ENCODE measurements at regions of chr12 and their contacts with region 1.

Region 1: DNA sequence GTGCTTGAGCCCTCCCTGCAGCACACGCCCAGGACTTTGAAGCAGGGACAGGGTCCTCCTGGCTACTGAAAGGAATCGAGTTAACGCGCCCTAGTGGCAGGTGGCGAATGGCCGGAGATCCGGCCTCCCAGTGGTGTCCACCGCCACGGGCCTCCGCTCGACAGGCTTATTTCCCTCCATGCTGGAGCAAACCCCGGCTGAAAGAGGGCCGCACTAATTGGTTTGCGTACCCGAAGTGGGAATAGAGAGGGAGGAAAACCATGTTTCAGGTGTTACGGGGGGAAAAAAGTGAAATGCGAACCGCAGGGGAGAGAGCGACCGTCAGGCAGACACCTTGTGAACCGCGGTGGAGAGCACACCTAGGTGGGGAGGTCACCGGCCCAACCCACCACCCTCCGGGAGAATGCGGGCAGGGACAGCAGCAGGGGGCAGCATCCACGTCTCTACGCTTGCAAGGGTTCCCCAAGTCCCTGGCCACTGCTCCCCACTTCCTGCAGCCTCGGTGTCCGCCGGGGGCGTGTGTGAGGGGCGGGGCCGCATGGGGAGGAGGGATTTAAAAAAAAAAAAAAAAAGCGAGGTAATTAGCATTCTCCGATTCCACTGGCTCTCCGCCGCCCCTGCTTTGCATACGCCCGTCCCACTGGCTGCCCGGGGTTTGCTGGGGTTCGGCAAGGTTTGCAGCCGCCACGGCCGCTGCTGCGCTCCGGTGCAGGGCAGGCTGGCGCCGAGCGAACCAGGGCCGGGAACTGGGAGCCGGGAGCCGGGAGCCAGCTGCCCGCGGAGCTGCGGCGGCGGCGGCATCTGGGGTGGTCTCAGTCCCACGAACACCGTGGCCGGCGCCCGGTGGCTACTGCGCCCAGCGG is 224.6 kb upstream of the CRY1 start:
- DNase-seq: peak; percentile 88
- ATAC-seq: peak; percentile 75
- H3K4me3 Mint-ChIP-seq: peak overlapping the region; percentile 89
- H3K27ac Mint-ChIP-seq: peak overlapping the region; percentile 59
- H3K4me1 Mint-ChIP-seq: peaks cover 19% of the 10 kb centered on the region
- H3K27me3 Mint-ChIP-seq: peaks cover 35% of the 10 kb centered on the region

Region 2: GRCh38 chr12:107264667-107265066 is 53.3 kb before region 1 on chr12:
- POLR2A ChIA-PET with region 1: no interaction called
- DNase-seq: no peak
- ATAC-seq: no peak
- H3K4me3 Mint-ChIP-seq: no peak overlapping the region
- H3K27ac Mint-ChIP-seq: no peak overlapping the region
- H3K4me1 Mint-ChIP-seq: no peaks in the 10 kb centered on the region
- H3K27me3 Mint-ChIP-seq: no peaks in the 10 kb centered on the region

Region 3: DNA sequence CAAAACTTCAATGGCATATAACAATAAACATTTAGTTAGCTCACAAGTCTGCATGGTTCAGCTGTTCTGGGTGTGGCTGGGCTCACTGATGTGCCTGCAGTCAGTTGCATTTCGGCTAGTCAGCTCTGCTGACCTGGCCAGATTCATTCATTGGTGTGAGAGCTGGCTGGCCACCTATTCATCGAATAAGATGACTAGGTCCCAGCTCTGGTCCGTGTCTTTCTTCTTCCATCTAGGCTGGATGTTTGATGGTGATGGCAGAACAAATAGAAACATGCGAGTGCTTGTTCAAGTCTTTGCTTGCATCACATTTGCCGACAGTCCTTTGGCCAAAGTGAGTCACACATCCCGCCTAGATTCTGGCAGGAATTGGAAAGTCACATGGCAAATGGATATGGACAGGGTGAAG is 21.3 kb before region 1 on chr12:
- POLR2A ChIA-PET with region 1: no interaction called
- DNase-seq: no peak
- ATAC-seq: no peak
- H3K4me3 Mint-ChIP-seq: no peak overlapping the region
- H3K27ac Mint-ChIP-seq: no peak overlapping the region
- H3K4me1 Mint-ChIP-seq: peaks cover 6% of the 10 kb centered on the region
- H3K27me3 Mint-ChIP-seq: peaks cover 2% of the 10 kb centered on the region

Region 4: GRCh38 chr12:107328442-107329133 is 10.6 kb after region 1 on chr12:
- POLR2A ChIA-PET with region 1: interaction called, 17 read pairs
- DNase-seq: no peak
- ATAC-seq: peak; percentile 19
- H3K4me3 Mint-ChIP-seq: peak overlapping the region; percentile 53
- H3K27ac Mint-ChIP-seq: peak overlapping the region; percentile 17
- H3K4me1 Mint-ChIP-seq: peaks cover 76% of the 10 kb centered on the region
- H3K27me3 Mint-ChIP-seq: no peaks in the 10 kb centered on the region

Region 5: GRCh38 chr12:107349008-107349747 is 31.2 kb after region 1 on chr12:
- POLR2A ChIA-PET with region 1: interaction called, 12 read pairs
- DNase-seq: no peak
- ATAC-seq: no peak
- H3K4me3 Mint-ChIP-seq: no peak overlapping the region
- H3K27ac Mint-ChIP-seq: no peak overlapping the region
- H3K4me1 Mint-ChIP-seq: peaks cover 52% of the 10 kb centered on the region
- H3K27me3 Mint-ChIP-seq: no peaks in the 10 kb centered on the region

Region 6: DNA sequence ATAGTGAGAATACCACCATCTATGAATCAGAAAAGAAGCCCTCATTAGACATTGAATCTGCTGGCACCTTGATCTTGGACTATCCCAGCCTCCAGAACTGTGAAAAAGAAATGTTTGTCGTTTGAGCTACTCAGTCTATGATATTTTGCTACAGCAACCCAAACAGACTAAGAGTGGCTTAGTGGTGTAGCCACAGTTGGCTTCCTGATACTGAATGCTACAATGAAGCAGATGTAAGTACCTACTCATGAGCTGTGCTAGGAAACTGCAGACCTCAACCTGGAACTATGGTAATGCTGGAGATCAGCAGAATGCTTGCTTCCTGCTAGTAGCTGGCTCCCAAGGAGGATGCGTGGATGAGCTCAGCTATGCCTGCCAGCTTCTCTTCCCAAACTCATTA is 44.0 kb after region 1 on chr12:
- POLR2A ChIA-PET with region 1: interaction called, 22 read pairs
- DNase-seq: no peak
- ATAC-seq: peak; percentile 93
- H3K4me3 Mint-ChIP-seq: no peak overlapping the region
- H3K27ac Mint-ChIP-seq: peak overlapping the region; percentile 43
- H3K4me1 Mint-ChIP-seq: peaks cover 50% of the 10 kb centered on the region
- H3K27me3 Mint-ChIP-seq: no peaks in the 10 kb centered on the region

Region 7: DNA sequence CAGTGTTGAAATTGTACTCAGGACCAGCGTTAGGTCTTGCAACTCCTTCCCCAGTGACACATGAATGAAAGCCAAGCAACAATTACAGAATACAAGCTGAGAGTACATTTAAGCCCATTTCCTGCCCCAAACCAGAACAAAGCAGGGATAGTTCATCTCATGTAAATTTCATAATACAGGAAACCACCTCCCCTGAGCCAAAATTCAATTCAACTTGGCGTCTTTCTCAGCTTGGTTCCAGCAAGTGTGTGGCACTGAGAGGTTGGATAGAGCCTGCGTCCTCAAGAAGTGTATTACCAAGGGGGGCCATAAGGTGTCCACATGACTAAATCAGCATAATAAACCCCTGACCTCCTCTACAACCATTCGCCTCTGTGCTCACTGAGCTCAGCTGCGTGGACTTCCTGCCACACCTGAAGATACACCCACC is 54.3 kb after region 1 on chr12:
- POLR2A ChIA-PET with region 1: interaction called, 189 read pairs
- DNase-seq: peak; percentile 53
- ATAC-seq: peak; percentile 56
- H3K4me3 Mint-ChIP-seq: peak overlapping the region; percentile 71
- H3K27ac Mint-ChIP-seq: peak overlapping the region; percentile 94
- H3K4me1 Mint-ChIP-seq: peaks cover 73% of the 10 kb centered on the region
- H3K27me3 Mint-ChIP-seq: no peaks in the 10 kb centered on the region

Region 8: DNA sequence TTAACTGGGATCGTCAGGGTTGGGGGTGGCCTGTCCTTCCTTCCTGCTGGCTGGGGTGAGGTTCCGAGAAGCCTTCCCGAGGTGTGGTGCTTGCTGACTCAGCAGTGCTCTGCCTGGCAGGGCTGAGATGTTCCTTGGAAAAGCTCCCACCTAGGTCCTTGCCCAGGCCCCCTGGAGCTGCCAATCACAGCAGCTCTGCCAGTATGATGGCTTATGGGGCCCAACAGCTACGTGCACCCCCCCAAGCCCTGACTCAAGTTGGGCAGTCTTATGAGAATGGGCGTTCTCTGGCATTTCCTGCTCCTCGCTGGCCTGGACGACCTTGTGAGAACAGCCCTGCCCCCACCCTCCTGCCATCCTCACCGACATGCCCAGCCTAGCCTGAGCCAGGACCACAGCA is 67.5 kb after region 1 on chr12:
- POLR2A ChIA-PET with region 1: interaction called, 12 read pairs
- DNase-seq: no peak
- ATAC-seq: no peak
- H3K4me3 Mint-ChIP-seq: no peak overlapping the region
- H3K27ac Mint-ChIP-seq: no peak overlapping the region
- H3K4me1 Mint-ChIP-seq: peaks cover 30% of the 10 kb centered on the region
- H3K27me3 Mint-ChIP-seq: no peaks in the 10 kb centered on the region

Region 9: GRCh38 chr12:107402041-107403022 is 84.3 kb after region 1 on chr12:
- POLR2A ChIA-PET with region 1: interaction called, 74 read pairs
- DNase-seq: peak; percentile 61
- ATAC-seq: peak; percentile 49
- H3K4me3 Mint-ChIP-seq: no peak overlapping the region
- H3K27ac Mint-ChIP-seq: peak overlapping the region; percentile 43
- H3K4me1 Mint-ChIP-seq: peaks cover 47% of the 10 kb centered on the region
- H3K27me3 Mint-ChIP-seq: no peaks in the 10 kb centered on the region

Measured in activated naive CD8-positive, alpha-beta T cell treated with anti-CD3 and anti-CD28 coated beads, Interleukin-2, amount 10 ng/mL, durations not matched to agents 7 days and 5 days (primary cell).